ENCODE measurements at regions of chr5 and their contacts with region 1.

Region 1: GRCh38 chr5:24226479-24226878 is 418.3 kb downstream of the CDH10 start:
- DNase-seq: no peak
- ATAC-seq: no peak
- H3K4me3 ChIP-seq: no peak overlapping the region
- H3K27ac ChIP-seq: no peak overlapping the region
- H3K4me1 ChIP-seq: peaks cover 23% of the 10 kb centered on the region
- H3K27me3 ChIP-seq: no peaks in the 10 kb centered on the region
- CTCF ChIP-seq: no peak

Region 2: DNA sequence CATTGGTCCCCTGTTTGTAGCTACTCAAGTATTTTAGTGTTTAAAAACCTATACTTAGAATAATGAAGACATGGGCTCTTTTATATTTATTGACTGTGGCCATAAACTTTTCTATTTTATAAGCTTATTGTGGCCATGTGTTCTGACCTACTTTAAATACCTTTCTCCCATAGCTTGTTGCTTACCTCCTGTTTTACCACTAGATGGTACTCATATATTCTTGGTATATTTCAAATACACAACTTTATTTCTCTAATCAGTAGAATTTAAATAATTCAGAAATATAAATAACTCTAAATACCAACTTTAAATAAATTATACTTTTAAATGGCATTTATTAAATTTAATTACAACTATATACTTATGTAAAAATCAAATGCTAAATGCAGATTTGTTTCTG is 221.1 kb before region 1 on chr5:
- CTCF ChIA-PET with region 1: no interaction called
- POLR2A ChIA-PET with region 1: no interaction called
- intact Hi-C with region 1: loop called (anchors 10 kb)
- DNase-seq: peak; percentile 29
- ATAC-seq: 0 out of 2 replicates have a peak, but pooled peaks have one; percentile 50
- H3K4me3 ChIP-seq: no peak overlapping the region
- H3K27ac ChIP-seq: no peak overlapping the region
- H3K4me1 ChIP-seq: no peaks in the 10 kb centered on the region
- H3K27me3 ChIP-seq: no peaks in the 10 kb centered on the region
- CTCF ChIP-seq: peak; percentile 57

Region 3: DNA sequence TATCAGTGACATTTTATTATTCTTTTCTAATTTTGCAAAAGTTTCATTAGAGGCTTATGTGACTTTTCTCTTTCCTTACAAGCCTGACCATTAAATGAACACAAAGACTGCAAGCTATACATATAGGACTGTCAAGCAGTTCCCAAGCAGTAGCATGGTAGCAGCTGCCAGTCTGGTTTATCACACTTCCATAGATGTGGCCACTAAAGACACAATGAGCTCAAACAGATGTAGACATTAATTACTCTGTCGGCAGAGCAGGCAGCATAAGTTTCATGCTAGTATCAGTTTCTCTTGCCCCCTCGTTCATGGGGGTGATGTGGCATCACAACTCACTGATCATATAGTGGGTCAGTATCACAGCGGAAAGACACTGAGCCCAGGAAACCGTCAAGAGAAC is 328.8 kb after region 1 on chr5:
- CTCF ChIA-PET with region 1: no interaction called
- POLR2A ChIA-PET with region 1: no interaction called
- intact Hi-C with region 1: no loop called
- DNase-seq: no peak
- ATAC-seq: no peak
- H3K4me3 ChIP-seq: no peak overlapping the region
- H3K27ac ChIP-seq: no peak overlapping the region
- H3K4me1 ChIP-seq: no peaks in the 10 kb centered on the region
- H3K27me3 ChIP-seq: no peaks in the 10 kb centered on the region
- CTCF ChIP-seq: no peak